ENCODE measurements at regions of chr21 and their contacts with region 1.

Region 1: GRCh38 chr21:42164064-42164789 is 54.7 kb upstream of the ABCG1 start:
- DNase-seq: peak; percentile 20
- H3K4me3 ChIP-seq: no peak overlapping the region
- H3K27ac ChIP-seq: no peak overlapping the region
- H3K4me1 ChIP-seq: no peaks in the 10 kb centered on the region
- H3K27me3 ChIP-seq: no peaks in the 10 kb centered on the region
- CTCF ChIP-seq: peak; percentile 50 to 65

Region 2: DNA sequence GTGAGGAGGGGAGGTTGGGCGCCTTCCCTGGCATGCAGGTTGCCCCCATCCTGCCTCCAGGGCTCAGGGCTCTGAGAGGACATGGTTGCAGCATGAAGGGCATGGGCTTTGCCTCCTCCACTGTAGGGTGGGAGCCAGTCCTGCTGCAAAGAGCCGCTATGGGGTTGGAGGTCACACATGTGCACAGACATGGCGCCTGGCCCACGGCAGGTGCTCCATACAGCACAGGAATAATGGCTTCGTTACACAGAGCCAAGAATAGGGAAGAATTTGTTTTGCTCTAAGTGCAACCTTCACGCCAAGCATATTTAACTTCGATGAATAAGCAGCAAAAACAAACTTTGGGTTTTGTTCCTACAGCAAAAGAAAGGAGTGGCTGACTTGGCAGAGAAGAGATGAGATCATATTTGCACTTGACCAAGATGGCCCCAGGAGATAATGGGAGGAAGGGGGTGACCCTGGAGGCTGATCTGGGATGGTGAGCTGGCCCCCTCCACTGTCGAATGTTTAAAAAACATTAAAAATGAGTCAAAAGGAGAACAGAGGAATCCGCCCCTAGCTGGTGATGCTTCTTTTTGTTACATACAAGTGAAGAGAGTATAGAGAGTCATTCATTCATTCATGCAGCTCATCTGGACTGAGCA is 198.1 kb before region 1 on chr21:
- CTCF ChIA-PET with region 1: no interaction called
- dilution Hi-C with region 1: no loop called
- in situ Hi-C with region 1: no loop called
- intact Hi-C with region 1: no loop called
- DNase-seq: no peak
- H3K4me3 ChIP-seq: no peak overlapping the region
- H3K27ac ChIP-seq: no peak overlapping the region
- H3K4me1 ChIP-seq: no peaks in the 10 kb centered on the region
- H3K27me3 ChIP-seq: no peaks in the 10 kb centered on the region
- CTCF ChIP-seq: no peak

Region 3: GRCh38 chr21:42145569-42146272 is 18.5 kb before region 1 on chr21:
- CTCF ChIA-PET with region 1: no interaction called
- dilution Hi-C with region 1: no loop called
- in situ Hi-C with region 1: no loop called
- intact Hi-C with region 1: no loop called
- DNase-seq: peak; percentile 29
- H3K4me3 ChIP-seq: no peak overlapping the region
- H3K27ac ChIP-seq: no peak overlapping the region
- H3K4me1 ChIP-seq: no peaks in the 10 kb centered on the region
- H3K27me3 ChIP-seq: no peaks in the 10 kb centered on the region
- CTCF ChIP-seq: peak; percentile 92

Region 4: GRCh38 chr21:42309753-42310221 is 145.6 kb after region 1 on chr21:
- CTCF ChIA-PET with region 1: no interaction called
- dilution Hi-C with region 1: no loop called
- in situ Hi-C with region 1: no loop called
- intact Hi-C with region 1: loop called (anchors 2 kb)
- DNase-seq: no peak
- H3K4me3 ChIP-seq: no peak overlapping the region
- H3K27ac ChIP-seq: no peak overlapping the region
- H3K4me1 ChIP-seq: no peaks in the 10 kb centered on the region
- H3K27me3 ChIP-seq: no peaks in the 10 kb centered on the region
- CTCF ChIP-seq: peak; percentile 70 to 80